ENCODE measurements at regions of chr16 and their contacts with region 1.

Region 1: GRCh38 chr16:84084570-84085270 is 32.0 kb downstream of the MBTPS1 start:
- DNase-seq: peak; percentile 47 to 81 (median 59)
- H3K4me3 ChIP-seq: no peak overlapping the region
- H3K4me3 Mint-ChIP-seq: no peak overlapping the region
- H3K27ac ChIP-seq: no peak overlapping the region
- H3K27ac Mint-ChIP-seq: peak overlapping the region in 4 of 8 donors; percentile 21 to 63 (median 36)
- H3K4me1 ChIP-seq: peaks cover 22% of the 10 kb centered on the region
- H3K4me1 Mint-ChIP-seq: peaks cover 25 to 49% (median 43%) of the 10 kb centered on the region in 3 donors
- H3K27me3 ChIP-seq: no peaks in the 10 kb centered on the region
- H3K27me3 Mint-ChIP-seq: no peaks in the 10 kb centered on the region

Region 2: GRCh38 chr16:83899272-83899897 is 185.3 kb before region 1 on chr16:
- CTCF ChIA-PET with region 1: no interaction called
- POLR2A ChIA-PET with region 1: no interaction called
- DNase-seq: peak; percentile 17 to 63 (median 31)
- H3K4me3 ChIP-seq: peak overlapping the region; percentile 62
- H3K4me3 Mint-ChIP-seq: peak overlapping the region; percentile 87 to 96 (median 92)
- H3K27ac ChIP-seq: peak overlapping the region; percentile 34
- H3K27ac Mint-ChIP-seq: peak overlapping the region; percentile 7 to 94 (median 86)
- H3K4me1 ChIP-seq: peaks cover 25% of the 10 kb centered on the region
- H3K4me1 Mint-ChIP-seq: peaks cover 30 to 55% (median 50%) of the 10 kb centered on the region in 3 donors
- H3K27me3 ChIP-seq: no peaks in the 10 kb centered on the region
- H3K27me3 Mint-ChIP-seq: peaks cover 6 to 17% of the 10 kb centered on the region in 2 donors

Region 3: DNA sequence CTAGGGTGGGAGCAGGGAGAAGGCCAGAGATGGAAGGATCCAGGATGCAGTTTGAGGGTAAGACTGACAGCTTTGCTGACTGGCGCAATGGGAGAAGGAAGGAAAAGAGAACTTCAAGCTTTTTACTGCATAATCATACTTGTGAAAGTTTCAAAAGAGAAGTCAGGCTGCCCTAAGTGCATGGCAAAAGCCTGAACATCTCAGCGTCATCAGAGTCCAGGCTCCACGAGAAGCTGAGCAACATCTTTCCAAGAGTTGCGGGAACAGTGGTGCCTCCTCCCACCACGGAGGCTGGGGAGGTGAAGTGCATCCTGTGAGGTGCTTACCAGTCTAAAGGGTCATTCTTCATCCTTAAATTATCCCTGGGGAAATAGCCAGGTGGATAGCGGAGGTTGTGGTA is 15.2 kb before region 1 on chr16:
- CTCF ChIA-PET with region 1: interaction called, 10 read pairs
- POLR2A ChIA-PET with region 1: no interaction called
- DNase-seq: no peak
- H3K4me3 ChIP-seq: no peak overlapping the region
- H3K4me3 Mint-ChIP-seq: no peak overlapping the region
- H3K27ac ChIP-seq: no peak overlapping the region
- H3K27ac Mint-ChIP-seq: peak overlapping the region in 2 of 8 donors; percentile 49
- H3K4me1 ChIP-seq: no peaks in the 10 kb centered on the region
- H3K4me1 Mint-ChIP-seq: peaks cover 0 to 2% (median 0%) of the 10 kb centered on the region in 3 donors
- H3K27me3 ChIP-seq: no peaks in the 10 kb centered on the region
- H3K27me3 Mint-ChIP-seq: no peaks in the 10 kb centered on the region

Region 4: DNA sequence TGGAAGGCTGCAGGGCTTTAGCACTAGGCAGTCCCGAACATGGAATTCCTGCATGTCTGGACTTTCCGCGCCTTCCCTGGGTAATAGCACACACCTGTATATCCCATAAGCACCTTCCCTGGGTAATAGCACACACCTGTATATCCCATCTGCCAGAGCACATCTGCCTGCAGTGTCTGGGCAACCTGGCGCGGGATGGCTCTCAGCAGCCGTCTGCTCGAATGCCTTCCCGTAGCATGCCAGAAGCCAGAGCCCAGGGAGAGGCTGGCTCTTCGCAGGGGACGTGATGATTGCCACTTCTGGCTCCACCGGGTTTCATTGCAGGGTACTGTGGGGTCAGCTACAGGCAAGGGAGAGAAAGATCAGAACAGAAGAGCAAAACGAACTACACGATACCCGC is 10.7 kb after region 1 on chr16:
- CTCF ChIA-PET with region 1: no interaction called
- POLR2A ChIA-PET with region 1: no interaction called
- DNase-seq: no peak
- H3K4me3 ChIP-seq: no peak overlapping the region
- H3K4me3 Mint-ChIP-seq: no peak overlapping the region
- H3K27ac ChIP-seq: no peak overlapping the region
- H3K27ac Mint-ChIP-seq: peak overlapping the region in 1 of 8 donors; percentile 29
- H3K4me1 ChIP-seq: no peaks in the 10 kb centered on the region
- H3K4me1 Mint-ChIP-seq: peaks cover 8 to 21% (median 15%) of the 10 kb centered on the region in 3 donors
- H3K27me3 ChIP-seq: no peaks in the 10 kb centered on the region
- H3K27me3 Mint-ChIP-seq: no peaks in the 10 kb centered on the region

Region 5: GRCh38 chr16:84144859-84145639 is 60.3 kb after region 1 on chr16 and contains the starts of genes DNAAF1 and HSDL1:
- CTCF ChIA-PET with region 1: no interaction called
- POLR2A ChIA-PET with region 1: no interaction called
- DNase-seq: peak; percentile 91 to 95 (median 95)
- H3K4me3 ChIP-seq: peak within 1 kb of the TSS; percentile 77
- H3K4me3 Mint-ChIP-seq: peak within 1 kb of the TSS; percentile 90 to 98 (median 95)
- H3K27ac ChIP-seq: peak within 1 kb of the TSS; percentile 70
- H3K27ac Mint-ChIP-seq: peak within 1 kb of the TSS; percentile 84 to 97 (median 90)
- H3K4me1 ChIP-seq: peaks cover 15% of the 10 kb centered on the region
- H3K4me1 Mint-ChIP-seq: peaks cover 15 to 29% (median 21%) of the 10 kb centered on the region in 3 donors
- H3K27me3 ChIP-seq: peaks cover 5% of the 10 kb centered on the region
- H3K27me3 Mint-ChIP-seq: peaks cover 0 to 13% of the 10 kb centered on the region in 2 donors
- total RNA-seq, gene DNAAF1: 0.31 TPM in 1 of 2 experiments, not detected in the other
- total RNA-seq, gene HSDL1: 13.5 to 15.2 TPM

Measured in CD8-positive, alpha-beta memory T cell (primary cell).